ENCODE measurements at regions of chr6 and their contacts with region 1.

Region 1: DNA sequence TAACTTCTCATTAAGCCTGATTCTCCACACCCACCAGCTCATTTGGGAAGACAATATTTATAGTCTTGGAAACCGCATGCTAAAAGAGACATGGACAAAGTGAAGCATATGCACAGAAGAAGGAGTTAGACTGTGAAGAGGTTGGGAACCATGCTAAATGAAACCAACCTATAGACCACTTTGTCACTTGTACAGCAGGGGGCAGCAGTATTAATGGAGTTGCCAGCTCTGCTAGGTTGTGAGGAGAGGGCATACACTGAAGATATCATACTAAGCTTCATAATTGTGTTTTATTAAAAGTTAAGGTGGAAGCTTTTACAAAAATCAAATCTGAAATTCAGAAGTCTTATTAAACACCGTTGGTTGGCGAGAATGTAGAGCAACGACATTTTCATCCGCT is 38.3 kb upstream of the HMGCLL1 start:
- H3K4me3 ChIP-seq: no peak overlapping the region
- H3K27ac ChIP-seq: no peak overlapping the region
- H3K4me1 ChIP-seq: no peaks in the 10 kb centered on the region
- CTCF ChIP-seq: no peak

Region 2: GRCh38 chr6:55528621-55529020 is 88.7 kb before region 1 on chr6:
- CTCF ChIA-PET with region 1: no interaction called
- POLR2A ChIA-PET with region 1: no interaction called
- H3K4me3 ChIP-seq: no peak overlapping the region
- H3K27ac ChIP-seq: no peak overlapping the region
- H3K4me1 ChIP-seq: no peaks in the 10 kb centered on the region
- CTCF ChIP-seq: no peak

Region 3: GRCh38 chr6:55578537-55579363 is 38.5 kb before region 1 on chr6 and contains the start of gene HMGCLL1:
- CTCF ChIA-PET with region 1: no interaction called
- POLR2A ChIA-PET with region 1: no interaction called
- H3K4me3 ChIP-seq: peak within 1 kb of the TSS; percentile 76
- H3K27ac ChIP-seq: no peak within 1 kb of the TSS; the same call in 1 of the 2 replicates
- H3K4me1 ChIP-seq: no peaks in the 10 kb centered on the region
- CTCF ChIP-seq: peak; percentile 87

Region 4: GRCh38 chr6:55594442-55594841 is 22.8 kb before region 1 on chr6:
- CTCF ChIA-PET with region 1: interaction called, 10 read pairs
- POLR2A ChIA-PET with region 1: no interaction called
- H3K4me3 ChIP-seq: no peak overlapping the region
- H3K27ac ChIP-seq: no peak overlapping the region
- H3K4me1 ChIP-seq: no peaks in the 10 kb centered on the region
- CTCF ChIP-seq: no peak

Region 5: DNA sequence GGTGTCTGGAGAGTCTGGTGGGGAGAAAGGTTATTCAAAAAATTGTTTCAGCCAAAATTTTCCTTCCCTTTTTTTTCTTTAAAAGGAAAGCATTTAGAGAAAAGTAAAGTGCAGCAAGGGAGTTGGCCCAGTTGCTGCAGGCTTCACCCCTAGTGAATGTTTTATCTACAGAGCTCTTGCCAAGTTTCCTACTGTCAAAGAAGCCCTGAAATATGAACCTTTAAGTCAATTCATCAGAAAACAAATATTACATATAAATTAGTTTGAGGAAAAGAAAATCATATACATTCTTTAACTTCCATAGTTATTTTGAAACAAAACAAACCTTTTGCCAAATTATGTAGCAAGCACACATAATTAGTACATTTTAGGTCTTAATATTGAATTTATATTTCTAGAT is 13.3 kb before region 1 on chr6:
- CTCF ChIA-PET with region 1: interaction called, 12 read pairs
- POLR2A ChIA-PET with region 1: no interaction called
- H3K4me3 ChIP-seq: no peak overlapping the region
- H3K27ac ChIP-seq: no peak overlapping the region
- H3K4me1 ChIP-seq: no peaks in the 10 kb centered on the region
- CTCF ChIP-seq: no peak

Region 6: GRCh38 chr6:55636405-55637102 is 19.3 kb after region 1 on chr6:
- CTCF ChIA-PET with region 1: interaction called, 12 read pairs
- POLR2A ChIA-PET with region 1: no interaction called
- H3K4me3 ChIP-seq: no peak overlapping the region
- H3K27ac ChIP-seq: no peak overlapping the region
- H3K4me1 ChIP-seq: peaks cover 3% of the 10 kb centered on the region; the same call in 1 of the 2 replicates
- CTCF ChIP-seq: no peak

Region 7: GRCh38 chr6:55886185-55886836 is 269.0 kb after region 1 on chr6:
- CTCF ChIA-PET with region 1: interaction called, 20 read pairs
- POLR2A ChIA-PET with region 1: no interaction called
- H3K4me3 ChIP-seq: no peak overlapping the region
- H3K27ac ChIP-seq: no peak overlapping the region
- H3K4me1 ChIP-seq: peaks cover 13% of the 10 kb centered on the region
- CTCF ChIP-seq: no peak